CD4-positive, alpha-beta T cell (primary cell): ENCODE measurements at regions of chr1 and their contacts with region 1.

Region 1: DNA sequence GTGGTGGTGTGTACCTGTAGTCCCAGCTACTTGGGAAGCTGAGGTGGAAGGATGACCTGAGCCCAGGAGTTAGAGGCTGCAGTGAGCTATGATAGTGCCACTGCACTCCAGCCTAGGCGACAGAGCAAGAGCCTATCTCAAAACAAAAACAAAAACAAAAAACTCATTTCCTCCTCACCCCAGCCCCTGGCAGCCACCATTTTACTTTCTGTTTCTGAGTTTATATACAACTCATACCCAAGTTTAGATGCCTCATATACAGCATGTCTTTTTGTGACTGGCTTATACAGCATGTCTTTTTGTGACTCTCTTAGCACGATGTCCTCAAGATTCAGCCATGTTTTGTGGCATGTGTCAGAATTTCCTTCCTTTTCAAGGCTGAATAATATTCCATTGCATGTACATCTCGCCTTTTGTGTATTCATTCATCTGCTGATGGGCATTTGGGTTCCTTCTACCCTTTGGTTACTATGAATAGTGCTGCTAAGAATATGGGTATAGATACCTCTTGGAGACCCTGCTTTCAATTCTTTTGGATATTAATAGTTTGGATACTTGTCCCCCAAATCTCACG is 14.7 kb downstream of the COA7 start:
- DNase-seq: no peak
- ATAC-seq: no peak
- H3K4me3 ChIP-seq: no peak overlapping the region
- H3K4me3 Mint-ChIP-seq: no peak overlapping the region
- H3K27ac ChIP-seq: no peak overlapping the region
- H3K27ac Mint-ChIP-seq: no peak overlapping the region
- H3K4me1 ChIP-seq: peaks cover 9% of the 10 kb centered on the region
- H3K4me1 Mint-ChIP-seq: peaks cover 9% of the 10 kb centered on the region
- H3K27me3 ChIP-seq: no peaks in the 10 kb centered on the region
- H3K27me3 Mint-ChIP-seq: no peaks in the 10 kb centered on the region
- CTCF ChIP-seq: no peak

Region 2: GRCh38 chr1:52127181-52128180 is 556.0 kb before region 1 on chr1:
- CTCF ChIA-PET with region 1: interaction called, 4 read pairs
- POLR2A ChIA-PET with region 1: no interaction called
- intact Hi-C with region 1: loop called (anchors 1 to 5 kb)
- DNase-seq: peak in 5 of 14 experiments; percentile 7 to 63 (median 54)
- ATAC-seq: peak; percentile 41
- H3K4me3 ChIP-seq: no peak overlapping the region
- H3K4me3 Mint-ChIP-seq: no peak overlapping the region
- H3K27ac ChIP-seq: no peak overlapping the region
- H3K27ac Mint-ChIP-seq: no peak overlapping the region
- H3K4me1 ChIP-seq: no peaks in the 10 kb centered on the region
- H3K4me1 Mint-ChIP-seq: no peaks in the 10 kb centered on the region
- H3K27me3 ChIP-seq: no peaks in the 10 kb centered on the region
- H3K27me3 Mint-ChIP-seq: peaks cover 22% of the 10 kb centered on the region
- CTCF ChIP-seq: peak; percentile 75

Region 3: GRCh38 chr1:52253401-52253800 is 430.1 kb before region 1 on chr1:
- CTCF ChIA-PET with region 1: no interaction called
- POLR2A ChIA-PET with region 1: no interaction called
- intact Hi-C with region 1: no loop called
- DNase-seq: no peak
- ATAC-seq: no peak
- H3K4me3 ChIP-seq: no peak overlapping the region
- H3K4me3 Mint-ChIP-seq: no peak overlapping the region
- H3K27ac ChIP-seq: no peak overlapping the region
- H3K27ac Mint-ChIP-seq: no peak overlapping the region
- H3K4me1 ChIP-seq: no peaks in the 10 kb centered on the region
- H3K4me1 Mint-ChIP-seq: no peaks in the 10 kb centered on the region
- H3K27me3 ChIP-seq: no peaks in the 10 kb centered on the region
- H3K27me3 Mint-ChIP-seq: no peaks in the 10 kb centered on the region
- CTCF ChIP-seq: no peak

Region 4: DNA sequence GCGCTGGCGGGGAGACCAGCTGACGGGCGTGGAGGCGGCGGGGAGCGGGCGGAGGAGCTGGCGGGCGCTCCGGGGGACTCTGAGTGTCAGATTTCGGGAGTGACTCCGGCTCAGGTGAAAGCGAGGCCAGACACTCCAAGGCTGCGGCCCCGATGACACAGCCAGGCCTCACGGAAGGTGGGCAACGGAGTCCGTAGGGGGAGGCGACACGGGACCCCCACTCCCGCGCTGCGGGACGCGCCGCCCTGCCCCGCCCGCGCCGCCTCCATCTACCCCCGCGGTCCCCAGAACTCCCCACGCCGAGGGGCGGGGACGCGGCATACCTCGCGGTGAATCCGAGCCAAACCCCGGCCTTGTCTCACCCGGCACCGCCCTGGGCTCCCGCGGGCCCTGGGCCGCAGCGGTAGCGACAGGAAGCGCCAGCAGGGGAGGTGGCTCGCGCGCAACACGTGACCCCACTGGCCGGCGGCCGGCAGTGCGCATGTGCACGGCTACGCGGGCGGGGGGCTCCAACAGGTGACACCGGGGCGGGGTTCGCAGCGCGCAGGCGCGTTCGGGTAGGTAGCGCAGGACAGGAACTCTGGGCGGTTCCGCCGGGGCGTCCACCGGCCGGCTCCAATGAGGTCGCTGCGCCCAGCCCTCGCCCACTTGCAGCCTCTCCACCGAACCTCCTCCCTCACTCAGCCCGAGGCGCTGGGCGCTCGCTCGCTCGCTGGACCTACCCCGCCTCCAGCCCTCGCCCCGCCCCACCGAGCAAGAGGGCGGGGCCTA is 317.5 kb before region 1 on chr1 and contains the start of gene CC2D1B:
- CTCF ChIA-PET with region 1: interaction called, 3 read pairs
- POLR2A ChIA-PET with region 1: interaction called, 6 read pairs
- intact Hi-C with region 1: loop called in 1 of 2 experiments (anchors 1 kb)
- DNase-seq: peak; percentile 97 to 100 (median 99)
- ATAC-seq: peak; percentile 79
- H3K4me3 ChIP-seq: peak within 1 kb of the TSS; percentile 76
- H3K4me3 Mint-ChIP-seq: peak within 1 kb of the TSS; percentile 94
- H3K27ac ChIP-seq: peak within 1 kb of the TSS; percentile 77 to 89
- H3K27ac Mint-ChIP-seq: peak within 1 kb of the TSS; percentile 96
- H3K4me1 ChIP-seq: peaks cover 50% of the 10 kb centered on the region
- H3K4me1 Mint-ChIP-seq: peaks cover 60% of the 10 kb centered on the region
- H3K27me3 ChIP-seq: no peaks in the 10 kb centered on the region
- H3K27me3 Mint-ChIP-seq: no peaks in the 10 kb centered on the region
- CTCF ChIP-seq: no peak
- total RNA-seq, gene CC2D1B: 46.5 to 47.5 TPM

Region 5: GRCh38 chr1:52424231-52424636 is 259.2 kb before region 1 on chr1:
- CTCF ChIA-PET with region 1: interaction called, 8 read pairs
- POLR2A ChIA-PET with region 1: interaction called, 3 read pairs
- intact Hi-C with region 1: loop called in 1 of 2 experiments (anchors 1 kb)
- DNase-seq: peak in 12 of 14 experiments; percentile 11 to 82 (median 26)
- ATAC-seq: peak; percentile 88
- H3K4me3 ChIP-seq: peak overlapping the region; percentile 28
- H3K4me3 Mint-ChIP-seq: peak overlapping the region; percentile 53
- H3K27ac ChIP-seq: peak overlapping the region; percentile 78 to 81
- H3K27ac Mint-ChIP-seq: peak overlapping the region; percentile 100
- H3K4me1 ChIP-seq: peaks cover 21% of the 10 kb centered on the region
- H3K4me1 Mint-ChIP-seq: peaks cover 58% of the 10 kb centered on the region
- H3K27me3 ChIP-seq: no peaks in the 10 kb centered on the region
- H3K27me3 Mint-ChIP-seq: no peaks in the 10 kb centered on the region
- CTCF ChIP-seq: no peak

Region 6: GRCh38 chr1:52552505-52553361 is 130.7 kb before region 1 on chr1 and contains the start of gene TUT4:
- CTCF ChIA-PET with region 1: interaction called, 5 read pairs
- POLR2A ChIA-PET with region 1: interaction called, 7 read pairs
- intact Hi-C with region 1: loop called (anchors 5 kb)
- DNase-seq: peak; percentile 58 to 89 (median 70)
- ATAC-seq: peak; percentile 35
- H3K4me3 ChIP-seq: peak within 1 kb of the TSS; percentile 92
- H3K4me3 Mint-ChIP-seq: peak within 1 kb of the TSS; percentile 84
- H3K27ac ChIP-seq: peak within 1 kb of the TSS; percentile 91 to 94
- H3K27ac Mint-ChIP-seq: peak within 1 kb of the TSS; percentile 90
- H3K4me1 ChIP-seq: peaks cover 18% of the 10 kb centered on the region
- H3K4me1 Mint-ChIP-seq: peaks cover 47% of the 10 kb centered on the region
- H3K27me3 ChIP-seq: no peaks in the 10 kb centered on the region
- H3K27me3 Mint-ChIP-seq: no peaks in the 10 kb centered on the region
- CTCF ChIP-seq: peak; percentile 23
- total RNA-seq, gene TUT4: 141 to 147 TPM

Region 7: DNA sequence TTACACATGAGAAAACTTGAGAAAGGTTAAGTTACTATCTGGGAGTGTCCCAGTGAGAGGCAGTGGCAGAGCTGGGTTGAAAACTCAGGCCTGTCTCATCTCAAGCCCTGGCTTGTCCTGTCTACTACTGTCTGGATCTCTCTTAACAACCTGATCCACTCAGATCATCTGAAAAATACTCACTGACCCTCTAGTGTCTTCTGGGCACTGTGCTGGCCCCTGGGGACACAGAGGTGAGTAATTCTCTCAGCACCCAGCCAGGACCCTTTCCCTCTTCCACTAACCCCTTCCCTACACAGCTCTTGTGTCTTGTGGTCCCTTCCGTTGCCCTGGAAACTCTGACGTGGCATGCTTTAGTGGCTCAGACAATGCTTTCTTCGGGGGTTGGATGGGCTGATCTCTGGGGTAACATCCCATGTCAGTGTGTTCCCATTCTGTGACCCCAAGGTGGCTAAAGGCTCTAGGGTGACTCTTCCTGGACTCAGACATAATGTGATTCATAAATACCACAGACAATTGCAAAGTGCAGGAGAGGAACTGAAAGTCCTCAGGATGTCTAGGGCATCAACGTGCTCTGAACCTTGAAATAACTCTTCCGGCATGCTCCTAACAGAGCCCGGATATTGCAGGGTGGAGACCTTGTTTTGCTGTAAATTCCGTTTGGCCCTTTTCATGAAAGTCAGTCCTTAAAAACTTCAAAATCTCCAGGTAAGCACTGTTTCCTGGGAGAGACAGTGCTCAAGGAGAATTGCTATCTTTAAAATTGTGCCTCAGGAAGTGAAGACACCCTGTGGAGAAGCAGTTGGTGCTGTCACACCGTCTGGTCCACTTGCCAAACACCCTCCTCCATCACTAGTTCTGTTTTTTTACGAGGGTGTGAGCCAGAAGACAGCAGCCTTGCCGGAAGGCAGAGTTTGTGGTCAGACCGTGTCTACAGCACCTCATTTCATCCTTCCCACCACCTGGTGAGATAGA is 46.4 kb before region 1 on chr1:
- CTCF ChIA-PET with region 1: interaction called, 6 read pairs
- POLR2A ChIA-PET with region 1: interaction called, 7 read pairs
- intact Hi-C with region 1: loop called in 1 of 2 experiments (anchors 2 kb)
- DNase-seq: peak; percentile 58 to 91 (median 66)
- ATAC-seq: peak; percentile 66
- H3K4me3 ChIP-seq: peak overlapping the region; percentile 41
- H3K4me3 Mint-ChIP-seq: peak overlapping the region; percentile 86
- H3K27ac ChIP-seq: peak overlapping the region; percentile 93 to 94
- H3K27ac Mint-ChIP-seq: peak overlapping the region; percentile 98
- H3K4me1 ChIP-seq: peaks cover 92% of the 10 kb centered on the region
- H3K4me1 Mint-ChIP-seq: peaks cover 84% of the 10 kb centered on the region
- H3K27me3 ChIP-seq: no peaks in the 10 kb centered on the region
- H3K27me3 Mint-ChIP-seq: no peaks in the 10 kb centered on the region
- CTCF ChIP-seq: no peak

Region 8: GRCh38 chr1:52709016-52709415 is 25.6 kb after region 1 on chr1:
- CTCF ChIA-PET with region 1: no interaction called
- POLR2A ChIA-PET with region 1: no interaction called
- intact Hi-C with region 1: no loop called
- DNase-seq: no peak
- ATAC-seq: no peak
- H3K4me3 ChIP-seq: no peak overlapping the region
- H3K4me3 Mint-ChIP-seq: no peak overlapping the region
- H3K27ac ChIP-seq: no peak overlapping the region
- H3K27ac Mint-ChIP-seq: no peak overlapping the region
- H3K4me1 ChIP-seq: peaks cover 2% of the 10 kb centered on the region
- H3K4me1 Mint-ChIP-seq: no peaks in the 10 kb centered on the region
- H3K27me3 ChIP-seq: no peaks in the 10 kb centered on the region
- H3K27me3 Mint-ChIP-seq: no peaks in the 10 kb centered on the region
- CTCF ChIP-seq: no peak

Region 9: GRCh38 chr1:52733368-52733767 is 49.9 kb after region 1 on chr1:
- CTCF ChIA-PET with region 1: no interaction called
- POLR2A ChIA-PET with region 1: no interaction called
- intact Hi-C with region 1: no loop called
- DNase-seq: no peak
- ATAC-seq: no peak
- H3K4me3 ChIP-seq: no peak overlapping the region
- H3K4me3 Mint-ChIP-seq: no peak overlapping the region
- H3K27ac ChIP-seq: no peak overlapping the region
- H3K27ac Mint-ChIP-seq: no peak overlapping the region
- H3K4me1 ChIP-seq: peaks cover 15% of the 10 kb centered on the region
- H3K4me1 Mint-ChIP-seq: peaks cover 39% of the 10 kb centered on the region
- H3K27me3 ChIP-seq: no peaks in the 10 kb centered on the region
- H3K27me3 Mint-ChIP-seq: no peaks in the 10 kb centered on the region
- CTCF ChIP-seq: no peak

Region 10: GRCh38 chr1:53014791-53015507 is 331.5 kb after region 1 on chr1:
- CTCF ChIA-PET with region 1: no interaction called
- POLR2A ChIA-PET with region 1: no interaction called
- intact Hi-C with region 1: no loop called
- DNase-seq: peak; percentile 62 to 95 (median 69)
- ATAC-seq: peak; percentile 100
- H3K4me3 ChIP-seq: peak overlapping the region; percentile 58
- H3K4me3 Mint-ChIP-seq: peak overlapping the region; percentile 88
- H3K27ac ChIP-seq: no peak overlapping the region
- H3K27ac Mint-ChIP-seq: peak overlapping the region; percentile 41
- H3K4me1 ChIP-seq: peaks cover 9% of the 10 kb centered on the region
- H3K4me1 Mint-ChIP-seq: peaks cover 38% of the 10 kb centered on the region
- H3K27me3 ChIP-seq: no peaks in the 10 kb centered on the region
- H3K27me3 Mint-ChIP-seq: no peaks in the 10 kb centered on the region
- CTCF ChIP-seq: no peak